OCI-LY7 (cell line): ENCODE measurements at regions of chr16 and their contacts with region 1.

Region 1: GRCh38 chr16:11964761-11965551 is at the start of gene TNFRSF17:
- DNase-seq: peak; percentile 93
- H3K4me3 ChIP-seq: peak within 1 kb of the TSS; percentile 68
- H3K27ac ChIP-seq: peak within 1 kb of the TSS; percentile 94
- H3K4me1 ChIP-seq: peaks cover 82% of the 10 kb centered on the region
- CTCF ChIP-seq: no peak
- total RNA-seq, gene TNFRSF17: 53.4 and 58.2 TPM in 2 replicates

Region 2: DNA sequence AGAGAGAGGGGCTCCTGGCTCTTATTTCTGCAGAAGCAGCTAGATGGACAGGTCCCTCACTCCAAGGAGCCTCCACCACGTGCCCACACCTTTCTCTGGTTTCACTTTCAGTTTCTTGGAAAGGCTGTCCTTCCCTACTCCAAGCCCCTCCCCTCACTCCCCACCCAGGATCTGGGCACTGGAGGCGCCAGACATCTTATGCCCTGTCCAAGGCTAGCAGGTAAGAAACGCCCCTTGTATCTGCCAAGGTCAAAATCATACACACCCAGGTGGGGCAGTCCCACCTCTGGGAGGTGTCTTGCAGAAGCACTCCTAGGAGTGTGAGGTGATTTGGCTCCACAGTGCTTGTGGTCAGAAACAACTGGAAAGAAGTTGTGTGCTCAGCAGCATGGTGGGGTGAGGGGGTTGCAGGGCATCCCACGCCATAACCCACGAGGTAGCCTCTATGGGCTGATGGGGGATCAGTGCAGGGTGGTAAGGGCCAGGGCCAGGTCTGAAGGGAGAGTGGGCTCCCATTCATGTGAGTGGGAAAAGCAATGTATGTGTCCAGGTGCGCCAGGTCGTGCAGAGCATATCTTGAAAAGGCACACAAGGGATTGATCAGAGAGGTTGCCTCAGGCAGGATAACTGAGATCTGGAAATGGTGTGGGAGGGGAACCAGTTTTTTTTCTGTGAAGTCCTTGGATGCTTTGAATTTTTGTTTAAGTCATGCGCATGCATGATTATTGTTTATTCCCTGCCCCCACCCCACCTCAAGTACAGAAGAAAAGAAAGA is 652.1 kb before region 1 on chr16:
- CTCF ChIA-PET with region 1: no interaction called
- POLR2A ChIA-PET with region 1: no interaction called
- intact Hi-C with region 1: loop called (anchors 2 kb)
- DNase-seq: no peak
- H3K4me3 ChIP-seq: no peak overlapping the region
- H3K27ac ChIP-seq: peak overlapping the region; percentile 99
- H3K4me1 ChIP-seq: peaks cover 79% of the 10 kb centered on the region
- CTCF ChIP-seq: no peak

Region 3: GRCh38 chr16:11682655-11683096 is 282.3 kb before region 1 on chr16:
- CTCF ChIA-PET with region 1: no interaction called
- POLR2A ChIA-PET with region 1: no interaction called
- intact Hi-C with region 1: loop called (anchors 5 kb)
- DNase-seq: no peak
- H3K4me3 ChIP-seq: peak overlapping the region; percentile 59
- H3K27ac ChIP-seq: peak overlapping the region; percentile 98
- H3K4me1 ChIP-seq: peaks cover 100% of the 10 kb centered on the region
- CTCF ChIP-seq: no peak

Region 4: DNA sequence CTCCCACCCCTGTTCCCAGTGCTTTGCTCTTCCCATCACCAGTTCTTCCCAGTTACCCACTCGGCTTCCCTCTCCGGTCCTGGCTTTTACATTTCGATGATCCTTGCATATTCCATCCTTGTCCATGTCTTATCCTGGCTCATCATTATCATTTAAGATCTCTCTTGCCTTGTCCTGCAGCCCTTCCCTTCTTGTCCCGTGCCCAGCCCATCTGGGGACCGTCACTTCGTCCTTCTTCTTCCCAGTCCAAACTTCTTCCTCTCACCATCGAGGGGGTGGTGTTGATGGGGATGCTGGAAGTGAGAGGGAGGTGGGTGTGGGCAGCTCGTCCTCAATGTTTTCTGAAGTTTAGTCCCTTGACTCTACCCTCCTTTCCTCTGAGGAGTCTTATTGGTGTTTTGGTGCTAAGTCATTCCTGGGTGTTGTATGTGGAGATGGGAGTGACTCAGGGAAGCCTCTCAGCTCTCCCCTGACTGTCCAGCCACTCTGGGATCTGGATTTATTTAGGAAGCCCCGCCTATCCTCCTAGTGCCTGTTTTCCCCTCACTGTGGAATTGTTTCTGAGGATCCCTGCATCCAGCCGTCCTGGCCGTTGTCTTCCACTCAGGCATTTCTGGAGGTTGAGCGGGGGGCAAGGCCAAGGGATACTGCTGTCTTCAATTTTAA is 12.6 kb after region 1 on chr16:
- CTCF ChIA-PET with region 1: interaction called, 5 read pairs
- POLR2A ChIA-PET with region 1: interaction called, 32 read pairs
- intact Hi-C with region 1: no loop called
- DNase-seq: no peak
- H3K4me3 ChIP-seq: peak overlapping the region; percentile 98
- H3K27ac ChIP-seq: no peak overlapping the region
- H3K4me1 ChIP-seq: peaks cover 46% of the 10 kb centered on the region
- CTCF ChIP-seq: no peak

Region 5: DNA sequence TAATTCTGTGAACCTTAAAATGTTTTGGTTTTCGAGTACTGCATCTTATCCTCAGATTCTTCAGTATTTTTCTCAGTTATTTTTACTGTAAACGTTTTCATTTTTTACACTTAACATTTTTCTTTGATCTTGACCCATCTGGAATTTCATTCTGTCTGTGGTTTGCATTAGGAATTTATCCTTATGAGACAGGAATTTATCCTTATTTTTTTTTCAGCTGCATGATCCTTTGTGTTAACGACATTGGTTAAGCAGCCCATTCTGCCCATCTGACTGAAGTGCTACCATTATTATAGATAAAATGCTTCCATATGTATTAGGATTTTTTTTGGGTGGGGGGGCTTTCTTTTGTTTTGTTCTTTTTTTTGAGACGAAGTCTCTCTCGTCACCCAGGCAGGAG is 52.6 kb after region 1 on chr16:
- CTCF ChIA-PET with region 1: no interaction called
- POLR2A ChIA-PET with region 1: no interaction called
- intact Hi-C with region 1: no loop called
- DNase-seq: no peak
- H3K4me3 ChIP-seq: no peak overlapping the region
- H3K27ac ChIP-seq: no peak overlapping the region
- H3K4me1 ChIP-seq: peaks cover 12% of the 10 kb centered on the region
- CTCF ChIP-seq: no peak

Region 6: GRCh38 chr16:12228602-12229499 is 263.9 kb after region 1 on chr16:
- CTCF ChIA-PET with region 1: no interaction called
- POLR2A ChIA-PET with region 1: no interaction called
- intact Hi-C with region 1: loop called (anchors 10 kb)
- DNase-seq: peak; percentile 89
- H3K4me3 ChIP-seq: no peak overlapping the region
- H3K27ac ChIP-seq: peak overlapping the region; percentile 66
- H3K4me1 ChIP-seq: peaks cover 71% of the 10 kb centered on the region
- CTCF ChIP-seq: peak; percentile 96